ENCODE measurements at regions of chr1 and their contacts with region 1.

Region 1: GRCh38 chr1:67214420-67215174 is 48.3 kb downstream of the IL23R start:
- DNase-seq: peak in 1 of 2 experiments; percentile 24
- H3K4me3 ChIP-seq: no peak overlapping the region
- H3K27ac ChIP-seq: no peak overlapping the region
- H3K4me1 ChIP-seq: no peaks in the 10 kb centered on the region
- H3K27me3 ChIP-seq: no peaks in the 10 kb centered on the region
- CTCF ChIP-seq: peak; percentile 78

Region 2: DNA sequence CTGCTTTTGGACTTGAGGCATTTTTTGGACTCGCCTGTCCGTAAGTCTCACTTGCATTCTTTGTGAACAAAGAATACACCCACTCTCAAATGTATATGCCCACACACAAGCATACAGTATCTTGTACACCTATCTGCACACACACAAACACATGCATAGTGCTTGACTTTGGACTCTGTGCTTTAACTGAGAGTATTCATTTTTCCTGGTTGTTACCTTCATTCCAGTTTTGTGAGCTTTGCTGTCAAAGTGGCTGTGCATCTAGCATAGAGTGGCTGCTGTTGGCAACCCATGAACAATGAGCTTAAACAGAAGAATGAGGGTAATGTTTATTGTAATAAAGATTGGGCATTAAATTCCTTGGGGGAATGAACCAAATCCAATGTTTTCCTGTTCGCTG is 1222.9 kb before region 1 on chr1:
- CTCF ChIA-PET with region 1: interaction called, 11 read pairs
- POLR2A ChIA-PET with region 1: no interaction called
- intact Hi-C with region 1: no loop called
- DNase-seq: no peak
- H3K4me3 ChIP-seq: no peak overlapping the region
- H3K27ac ChIP-seq: no peak overlapping the region
- H3K4me1 ChIP-seq: no peaks in the 10 kb centered on the region
- H3K27me3 ChIP-seq: no peaks in the 10 kb centered on the region
- CTCF ChIP-seq: no peak

Region 3: GRCh38 chr1:66764994-66765578 is 449.5 kb before region 1 on chr1:
- CTCF ChIA-PET with region 1: interaction called, 6 read pairs
- POLR2A ChIA-PET with region 1: no interaction called
- intact Hi-C with region 1: loop called (anchors 5 kb)
- DNase-seq: peak in 1 of 2 experiments; percentile 34
- H3K4me3 ChIP-seq: no peak overlapping the region
- H3K27ac ChIP-seq: no peak overlapping the region
- H3K4me1 ChIP-seq: no peaks in the 10 kb centered on the region
- H3K27me3 ChIP-seq: no peaks in the 10 kb centered on the region
- CTCF ChIP-seq: peak; percentile 86

Region 4: DNA sequence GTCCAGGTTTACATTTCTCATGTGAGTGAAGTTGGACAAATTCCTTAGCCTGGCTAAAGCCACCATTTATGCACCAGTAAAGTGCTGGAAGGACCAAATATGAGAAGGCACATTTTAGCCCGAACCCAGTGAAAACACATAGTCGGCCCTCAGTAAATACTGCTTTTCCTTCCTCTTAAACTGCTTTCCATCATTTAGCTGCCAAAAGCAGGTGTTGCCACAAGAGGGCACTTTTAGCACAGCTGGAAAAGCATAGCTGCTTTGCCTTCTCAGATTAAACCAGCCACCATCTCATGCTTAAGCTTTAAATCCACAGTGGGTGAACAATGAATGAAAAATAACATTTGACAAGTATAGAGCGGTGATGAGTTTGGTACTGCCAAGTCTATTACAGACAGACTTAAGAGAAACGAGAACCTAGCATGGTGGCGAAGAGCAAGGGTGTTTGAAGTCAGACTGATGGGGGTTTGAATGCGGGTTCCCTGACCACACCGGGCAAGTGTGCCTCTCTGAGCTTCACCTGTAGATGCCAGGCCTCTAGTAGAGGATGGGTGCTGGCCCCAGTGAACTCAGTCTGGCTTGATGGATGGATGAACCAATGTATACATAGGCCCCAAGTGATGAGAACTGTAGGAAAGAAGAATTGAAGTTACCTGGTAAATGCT is 218.4 kb before region 1 on chr1:
- CTCF ChIA-PET with region 1: interaction called, 12 read pairs
- POLR2A ChIA-PET with region 1: interaction called, 3 read pairs
- intact Hi-C with region 1: loop called (anchors 1 kb)
- DNase-seq: peak; percentile 49 to 53
- H3K4me3 ChIP-seq: no peak overlapping the region
- H3K27ac ChIP-seq: no peak overlapping the region
- H3K4me1 ChIP-seq: no peaks in the 10 kb centered on the region
- H3K27me3 ChIP-seq: no peaks in the 10 kb centered on the region
- CTCF ChIP-seq: peak; percentile 83

Region 5: GRCh38 chr1:67019600-67020136 is 194.9 kb before region 1 on chr1:
- CTCF ChIA-PET with region 1: no interaction called
- POLR2A ChIA-PET with region 1: no interaction called
- intact Hi-C with region 1: no loop called
- DNase-seq: no peak
- H3K4me3 ChIP-seq: no peak overlapping the region
- H3K27ac ChIP-seq: no peak overlapping the region
- H3K4me1 ChIP-seq: no peaks in the 10 kb centered on the region
- H3K27me3 ChIP-seq: no peaks in the 10 kb centered on the region
- CTCF ChIP-seq: no peak

Region 6: DNA sequence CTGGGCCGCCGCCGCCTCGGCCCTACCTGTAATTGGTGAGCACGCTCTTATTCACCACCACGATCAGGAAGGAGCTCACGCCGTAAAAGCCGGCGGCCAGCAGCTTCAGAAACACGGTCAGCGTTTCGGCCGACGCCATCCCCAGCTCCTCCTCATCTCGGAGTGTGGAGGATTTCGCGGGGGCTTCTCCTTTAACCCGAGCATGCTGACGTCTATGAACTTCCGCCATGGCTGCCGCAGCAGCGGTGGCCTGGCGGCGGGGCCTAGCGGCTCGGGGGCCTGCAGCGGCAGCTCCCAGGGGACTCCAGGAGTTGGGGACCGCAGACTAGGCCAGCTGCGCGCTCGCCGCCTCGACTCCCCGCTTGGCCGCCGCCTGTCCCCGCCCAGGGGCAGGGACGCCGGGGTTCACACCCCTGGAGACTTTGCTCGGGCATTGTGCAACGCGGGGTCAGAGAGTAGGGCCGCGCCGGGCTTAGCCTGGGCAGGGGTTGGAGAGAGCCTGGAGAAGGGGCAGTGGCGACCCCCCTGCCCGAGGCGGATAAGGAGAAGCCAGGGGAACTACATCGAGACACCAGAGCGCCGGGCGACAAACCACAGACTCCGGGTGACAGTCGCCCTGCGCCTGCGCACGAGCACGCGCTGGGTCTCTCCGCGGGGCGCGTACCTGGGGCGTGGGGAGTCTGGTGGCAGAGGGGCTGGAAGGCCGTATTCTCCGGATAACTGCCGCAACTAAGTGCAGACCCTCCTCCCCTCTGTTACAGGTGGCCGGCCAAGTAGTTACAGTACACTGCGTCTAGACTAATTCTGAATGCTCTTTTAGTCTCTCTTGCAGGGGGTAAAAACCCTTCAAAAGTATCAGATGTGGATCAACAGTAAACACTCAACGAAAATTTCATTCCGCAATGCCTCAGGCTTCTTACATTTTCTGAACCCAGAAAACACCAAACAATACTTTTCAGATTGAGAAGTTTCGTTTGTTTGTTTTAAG is 160.5 kb before region 1 on chr1 and contains the start of gene SLC35D1:
- CTCF ChIA-PET with region 1: no interaction called
- POLR2A ChIA-PET with region 1: no interaction called
- intact Hi-C with region 1: loop called (anchors 10 kb)
- DNase-seq: peak; percentile 37 to 61
- H3K4me3 ChIP-seq: peak within 1 kb of the TSS; percentile 99
- H3K27ac ChIP-seq: peak within 1 kb of the TSS; percentile 41
- H3K4me1 ChIP-seq: peaks cover 13% of the 10 kb centered on the region
- H3K27me3 ChIP-seq: no peaks in the 10 kb centered on the region
- CTCF ChIP-seq: no peak
- total RNA-seq, gene SLC35D1: 2.3 and 2.6 TPM in 2 replicates